Naive thymus-derived CD4-positive, alpha-beta T cell (primary cell): ENCODE measurements at regions of chr14 and their contacts with region 1.

Region 1: DNA sequence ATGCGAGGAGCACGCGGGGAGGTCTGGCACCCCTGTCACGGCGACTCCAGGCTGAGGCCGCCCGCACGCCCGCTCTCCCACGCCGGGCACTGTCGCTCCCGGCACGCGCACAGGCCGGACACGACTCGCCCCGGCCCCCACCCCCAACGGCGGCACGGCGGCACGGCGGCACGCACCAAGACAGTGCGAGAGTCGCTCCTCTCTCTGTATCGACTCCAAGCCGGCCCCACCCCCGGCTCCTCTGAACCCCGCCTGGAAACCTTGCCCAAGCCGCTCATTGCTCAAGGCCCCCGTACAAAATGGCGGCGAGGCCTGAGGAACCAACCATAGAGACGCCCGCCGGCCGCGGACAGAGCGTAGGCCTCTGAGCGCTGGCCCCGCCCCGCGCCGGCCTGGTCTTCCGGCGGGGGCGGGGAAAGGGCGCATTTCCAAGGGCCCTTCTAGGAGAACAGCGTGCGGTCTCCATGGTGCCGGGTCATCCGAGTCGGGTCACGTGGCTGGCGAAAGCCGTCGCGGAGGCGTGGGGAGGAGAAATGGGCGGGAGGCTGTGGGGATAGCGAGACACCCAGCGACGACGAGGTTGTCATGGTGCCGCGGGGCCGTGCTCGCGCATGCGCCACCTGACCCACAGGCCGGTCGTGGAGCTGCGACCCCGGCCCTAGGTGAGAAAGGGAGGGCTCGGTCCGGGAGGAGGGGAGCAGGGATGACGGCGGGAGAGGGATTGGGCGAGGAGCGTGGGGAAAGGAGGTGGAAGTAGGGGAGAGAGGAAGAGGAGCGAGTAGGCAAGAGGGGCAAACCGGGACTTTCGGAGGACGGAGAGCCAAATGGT is at the start of gene CIPC:
- DNase-seq: peak; percentile 92 to 99 (median 98)
- ATAC-seq: peak; percentile 96
- H3K4me3 ChIP-seq: peak within 1 kb of the TSS; percentile 85
- H3K4me3 Mint-ChIP-seq: peak within 1 kb of the TSS; percentile 84 to 98 (median 90)
- H3K27ac ChIP-seq: peak within 1 kb of the TSS; percentile 97
- H3K27ac Mint-ChIP-seq: peak within 1 kb of the TSS; percentile 83 to 99 (median 97)
- H3K4me1 ChIP-seq: peaks cover 9 to 11% of the 10 kb centered on the region in 2 donors
- H3K4me1 Mint-ChIP-seq: peaks cover 24 to 55% (median 41%) of the 10 kb centered on the region in 7 donors
- H3K27me3 ChIP-seq: no peaks in the 10 kb centered on the region
- H3K27me3 Mint-ChIP-seq: peaks cover 0 to 3% (median 0%) of the 10 kb centered on the region in 5 donors
- total RNA-seq, gene CIPC: 5.5 to 14.2 (median 12.9) TPM

Region 2: GRCh38 chr14:76050797-76051392 is 1047.0 kb before region 1 on chr14:
- CTCF ChIA-PET with region 1: no interaction called
- POLR2A ChIA-PET with region 1: no interaction called
- intact Hi-C with region 1: loop called in 1 of 2 experiments (anchors 2 kb)
- DNase-seq: peak in 8 of 9 donors; percentile 15 to 61 (median 45)
- ATAC-seq: peak; percentile 61
- H3K4me3 ChIP-seq: no peak overlapping the region
- H3K4me3 Mint-ChIP-seq: no peak overlapping the region
- H3K27ac ChIP-seq: no peak overlapping the region
- H3K27ac Mint-ChIP-seq: no peak overlapping the region
- H3K4me1 ChIP-seq: no peaks in the 10 kb centered on the region
- H3K4me1 Mint-ChIP-seq: no peaks in the 10 kb centered on the region
- H3K27me3 ChIP-seq: no peaks in the 10 kb centered on the region
- H3K27me3 Mint-ChIP-seq: no peaks in the 10 kb centered on the region

Region 3: DNA sequence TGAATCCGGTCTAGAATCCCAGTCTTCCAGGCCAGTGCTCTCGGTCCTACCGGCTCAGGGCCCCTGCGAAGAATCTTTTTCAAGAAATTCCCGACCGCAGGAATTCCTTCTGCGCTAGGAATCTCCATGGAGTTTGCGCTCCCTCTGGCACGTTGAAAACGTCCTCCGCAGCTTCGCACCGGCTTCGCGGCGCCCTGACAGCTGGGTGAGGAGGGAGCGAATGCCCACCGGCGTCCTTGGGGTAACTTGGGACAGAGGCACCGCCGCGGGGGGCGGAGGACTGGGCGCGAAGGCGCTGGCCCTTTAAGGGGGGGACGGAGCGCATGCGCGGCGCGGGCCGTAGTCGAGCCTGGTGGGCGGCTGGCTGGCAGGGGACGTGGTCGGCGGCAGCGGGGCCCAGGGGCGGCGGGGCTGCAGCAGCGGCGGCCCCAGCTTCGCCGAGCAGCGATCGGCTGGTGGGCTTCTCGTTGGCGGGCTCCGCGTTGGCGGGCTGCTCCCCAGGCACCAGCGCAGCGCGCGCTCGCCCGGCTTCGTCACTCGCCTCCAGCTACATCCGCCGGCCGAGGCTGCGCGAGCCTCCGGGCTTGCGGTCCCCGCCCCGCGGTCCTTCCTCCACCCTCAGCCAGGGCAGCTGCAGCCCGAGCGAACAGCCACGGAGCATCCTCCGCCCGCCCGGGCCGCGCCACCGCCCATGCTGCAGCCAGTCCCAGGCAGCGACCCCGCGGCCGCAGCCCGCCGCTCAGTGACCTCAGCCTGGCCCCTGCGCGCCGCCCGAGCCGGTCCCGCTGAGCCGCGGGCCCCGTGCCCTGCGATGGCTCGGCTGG is 336.6 kb before region 1 on chr14 and contains the start of gene VASH1:
- CTCF ChIA-PET with region 1: no interaction called
- POLR2A ChIA-PET with region 1: no interaction called
- intact Hi-C with region 1: loop called in 1 of 2 experiments (anchors 5 kb)
- DNase-seq: peak in 7 of 9 donors; percentile 8 to 77 (median 25)
- ATAC-seq: peak; percentile 85
- H3K4me3 ChIP-seq: peak within 1 kb of the TSS; percentile 61
- H3K4me3 Mint-ChIP-seq: peak within 1 kb of the TSS; percentile 71 to 88 (median 82)
- H3K27ac ChIP-seq: no peak within 1 kb of the TSS
- H3K27ac Mint-ChIP-seq: peak within 1 kb of the TSS in 2 of 9 donors; percentile 44 to 91
- H3K4me1 ChIP-seq: peaks cover 0 to 5% of the 10 kb centered on the region in 2 donors
- H3K4me1 Mint-ChIP-seq: peaks cover 5 to 25% (median 10%) of the 10 kb centered on the region in 7 donors
- H3K27me3 ChIP-seq: peaks cover 0 to 5% of the 10 kb centered on the region in 2 donors
- H3K27me3 Mint-ChIP-seq: peaks cover 0 to 65% (median 26%) of the 10 kb centered on the region in 5 donors
- total RNA-seq, gene VASH1: 1.1 to 18.2 (median 5.6) TPM

Region 4: DNA sequence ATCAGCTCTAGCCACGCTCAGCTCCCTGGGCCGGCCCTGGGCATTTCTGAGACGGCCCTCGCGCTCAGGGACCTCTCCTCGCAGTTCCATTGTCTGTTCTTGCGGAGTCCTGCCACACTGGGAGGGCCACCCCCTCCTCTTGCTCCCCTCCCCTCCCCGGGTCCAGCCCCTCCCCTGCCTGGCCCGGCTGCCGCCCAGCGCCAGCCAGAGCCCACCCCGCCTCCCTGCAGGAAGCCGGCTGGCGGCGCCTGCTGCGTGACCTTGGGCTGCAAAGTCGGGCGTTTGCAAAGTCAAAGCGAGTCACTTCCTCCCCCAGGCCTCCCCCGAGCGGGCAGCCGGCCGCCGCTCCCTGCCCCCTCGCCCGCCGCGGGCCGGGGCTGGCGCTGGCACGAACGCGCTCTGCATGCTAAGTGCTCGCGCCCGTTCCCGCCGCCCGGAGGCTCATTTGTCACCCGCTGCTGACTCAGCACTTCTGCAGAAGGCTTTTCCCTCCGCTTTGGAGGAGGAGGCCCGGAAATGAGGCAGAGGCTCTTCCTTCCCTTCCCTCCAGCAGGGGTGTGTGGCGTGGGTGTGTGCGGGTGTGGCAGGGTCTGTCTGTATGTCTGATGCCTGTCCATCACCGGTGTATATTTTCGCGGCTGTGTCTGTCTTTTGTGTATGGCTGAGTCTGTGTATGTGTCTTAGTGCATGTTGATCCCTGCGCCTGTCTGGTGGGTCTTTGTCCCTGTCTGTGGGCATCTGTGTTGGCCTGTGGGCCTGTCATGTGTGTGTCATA is 141.4 kb before region 1 on chr14:
- CTCF ChIA-PET with region 1: no interaction called
- POLR2A ChIA-PET with region 1: no interaction called
- intact Hi-C with region 1: loop called (anchors 1 to 2 kb)
- DNase-seq: peak; percentile 70 to 90 (median 78)
- ATAC-seq: peak; percentile 82
- H3K4me3 ChIP-seq: peak overlapping the region; percentile 74
- H3K4me3 Mint-ChIP-seq: peak overlapping the region; percentile 82 to 97 (median 93)
- H3K27ac ChIP-seq: peak overlapping the region; percentile 87
- H3K27ac Mint-ChIP-seq: peak overlapping the region; percentile 88 to 99 (median 98)
- H3K4me1 ChIP-seq: peaks cover 38 to 49% of the 10 kb centered on the region in 2 donors
- H3K4me1 Mint-ChIP-seq: peaks cover 24 to 77% (median 71%) of the 10 kb centered on the region in 7 donors
- H3K27me3 ChIP-seq: no peaks in the 10 kb centered on the region
- H3K27me3 Mint-ChIP-seq: no peaks in the 10 kb centered on the region

Region 5: DNA sequence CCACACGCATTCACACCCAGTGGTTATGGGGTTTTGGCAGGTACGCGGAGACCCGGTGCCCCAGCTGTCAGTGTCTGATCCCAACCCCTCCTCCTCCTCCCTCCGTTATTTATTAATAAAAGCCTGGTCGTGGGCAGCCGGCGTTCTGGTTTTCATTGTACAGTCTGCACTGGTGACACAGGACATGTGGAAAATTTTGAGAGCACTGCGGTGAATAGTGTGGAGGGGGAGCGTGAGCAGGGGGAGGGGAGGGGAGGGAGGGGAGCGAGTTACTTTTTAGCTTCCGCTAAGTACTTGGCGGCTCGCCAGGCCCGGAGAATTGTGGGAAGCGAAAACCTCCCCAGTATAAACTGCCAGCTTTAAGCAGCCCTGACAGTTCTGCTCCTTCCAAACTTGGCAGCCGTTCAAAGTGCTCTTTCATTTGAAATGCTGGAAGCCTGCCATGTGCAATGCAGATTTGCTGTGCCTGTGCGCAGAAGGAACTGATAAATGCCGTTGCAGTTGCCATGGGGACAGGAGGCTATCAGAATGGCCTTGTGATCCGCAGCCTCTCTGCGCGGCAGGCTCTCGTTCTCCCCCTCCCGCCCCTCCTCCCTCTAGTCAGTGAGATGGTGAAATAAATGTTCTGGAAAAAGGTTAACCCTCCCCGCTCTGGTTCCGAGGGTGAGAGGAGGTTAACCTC is 57.7 kb before region 1 on chr14:
- CTCF ChIA-PET with region 1: no interaction called
- POLR2A ChIA-PET with region 1: interaction called, 3 read pairs
- intact Hi-C with region 1: loop called (anchors 1 to 2 kb)
- DNase-seq: peak; percentile 86 to 99 (median 99)
- ATAC-seq: peak; percentile 87
- H3K4me3 ChIP-seq: peak overlapping the region; percentile 78
- H3K4me3 Mint-ChIP-seq: peak overlapping the region; percentile 76 to 97 (median 87)
- H3K27ac ChIP-seq: peak overlapping the region; percentile 97
- H3K27ac Mint-ChIP-seq: peak overlapping the region; percentile 97 to 100 (median 99)
- H3K4me1 ChIP-seq: peaks cover 57 to 77% of the 10 kb centered on the region in 2 donors
- H3K4me1 Mint-ChIP-seq: peaks cover 50 to 97% (median 89%) of the 10 kb centered on the region in 7 donors
- H3K27me3 ChIP-seq: no peaks in the 10 kb centered on the region
- H3K27me3 Mint-ChIP-seq: no peaks in the 10 kb centered on the region

Region 6: GRCh38 chr14:77376771-77377501 is 279.0 kb after region 1 on chr14 and contains the starts of genes SAMD15 and TMED8:
- CTCF ChIA-PET with region 1: no interaction called
- POLR2A ChIA-PET with region 1: no interaction called
- intact Hi-C with region 1: loop called (anchors 1 kb)
- DNase-seq: peak; percentile 77 to 88 (median 83)
- ATAC-seq: peak; percentile 96
- H3K4me3 ChIP-seq: peak within 1 kb of the TSS; percentile 99
- H3K4me3 Mint-ChIP-seq: peak within 1 kb of the TSS in 7 of 10 donors; percentile 88 to 97 (median 93)
- H3K27ac ChIP-seq: peak within 1 kb of the TSS; percentile 87
- H3K27ac Mint-ChIP-seq: peak within 1 kb of the TSS; percentile 52 to 93 (median 77)
- H3K4me1 ChIP-seq: peaks cover 14 to 18% of the 10 kb centered on the region in 2 donors
- H3K4me1 Mint-ChIP-seq: peaks cover 17 to 41% (median 39%) of the 10 kb centered on the region in 7 donors
- H3K27me3 ChIP-seq: no peaks in the 10 kb centered on the region
- H3K27me3 Mint-ChIP-seq: peaks cover 0 to 10% (median 0%) of the 10 kb centered on the region in 5 donors
- total RNA-seq, gene SAMD15: 0.27 to 0.46 (median 0.42) TPM in 3 of 5 experiments, not detected in the others
- total RNA-seq, gene TMED8: 5.5 to 18.6 (median 7.0) TPM

Region 7: DNA sequence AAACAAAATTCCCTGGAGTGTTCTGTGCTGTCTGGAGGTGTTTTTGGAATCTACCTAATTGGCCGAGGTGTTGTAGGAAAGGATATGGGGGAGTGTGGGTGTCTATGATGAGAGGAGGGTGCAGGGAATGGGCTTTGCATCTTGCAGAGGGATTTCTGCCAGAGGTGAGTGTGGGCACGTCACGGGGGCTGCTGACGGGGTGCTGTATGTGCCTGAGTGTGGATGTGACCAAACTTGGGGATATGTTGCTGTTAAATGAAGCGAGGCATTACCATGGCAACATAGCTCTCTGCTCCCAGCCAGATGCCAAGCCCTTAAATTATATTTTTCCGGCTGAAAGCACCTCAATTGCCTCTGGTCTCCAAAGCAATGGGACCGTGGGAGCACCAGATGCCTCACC is 562.8 kb after region 1 on chr14:
- CTCF ChIA-PET with region 1: no interaction called
- POLR2A ChIA-PET with region 1: no interaction called
- intact Hi-C with region 1: no loop called
- DNase-seq: no peak
- ATAC-seq: no peak
- H3K4me3 ChIP-seq: no peak overlapping the region
- H3K4me3 Mint-ChIP-seq: no peak overlapping the region
- H3K27ac ChIP-seq: no peak overlapping the region
- H3K27ac Mint-ChIP-seq: no peak overlapping the region
- H3K4me1 ChIP-seq: no peaks in the 10 kb centered on the region
- H3K4me1 Mint-ChIP-seq: peaks cover 0 to 8% (median 0%) of the 10 kb centered on the region in 7 donors
- H3K27me3 ChIP-seq: no peaks in the 10 kb centered on the region
- H3K27me3 Mint-ChIP-seq: no peaks in the 10 kb centered on the region

Region 8: GRCh38 chr14:77760381-77761246 is 662.7 kb after region 1 on chr14 and contains the start of gene SNW1:
- CTCF ChIA-PET with region 1: no interaction called
- POLR2A ChIA-PET with region 1: no interaction called
- intact Hi-C with region 1: loop called (anchors 1 kb)
- DNase-seq: peak; percentile 80 to 94 (median 90)
- ATAC-seq: peak; percentile 95
- H3K4me3 ChIP-seq: peak within 1 kb of the TSS; percentile 94
- H3K4me3 Mint-ChIP-seq: peak within 1 kb of the TSS; percentile 91 to 97 (median 95)
- H3K27ac ChIP-seq: peak within 1 kb of the TSS; percentile 97
- H3K27ac Mint-ChIP-seq: peak within 1 kb of the TSS; percentile 92 to 99 (median 98)
- H3K4me1 ChIP-seq: peaks cover 28 to 30% of the 10 kb centered on the region in 2 donors
- H3K4me1 Mint-ChIP-seq: peaks cover 26 to 60% (median 42%) of the 10 kb centered on the region in 7 donors
- H3K27me3 ChIP-seq: no peaks in the 10 kb centered on the region
- H3K27me3 Mint-ChIP-seq: no peaks in the 10 kb centered on the region
- total RNA-seq, gene SNW1: 84.4 to 108 (median 97.7) TPM